GM23248 (cell line): ENCODE measurements at regions of chr19 and their contacts with region 1.

Region 1: DNA sequence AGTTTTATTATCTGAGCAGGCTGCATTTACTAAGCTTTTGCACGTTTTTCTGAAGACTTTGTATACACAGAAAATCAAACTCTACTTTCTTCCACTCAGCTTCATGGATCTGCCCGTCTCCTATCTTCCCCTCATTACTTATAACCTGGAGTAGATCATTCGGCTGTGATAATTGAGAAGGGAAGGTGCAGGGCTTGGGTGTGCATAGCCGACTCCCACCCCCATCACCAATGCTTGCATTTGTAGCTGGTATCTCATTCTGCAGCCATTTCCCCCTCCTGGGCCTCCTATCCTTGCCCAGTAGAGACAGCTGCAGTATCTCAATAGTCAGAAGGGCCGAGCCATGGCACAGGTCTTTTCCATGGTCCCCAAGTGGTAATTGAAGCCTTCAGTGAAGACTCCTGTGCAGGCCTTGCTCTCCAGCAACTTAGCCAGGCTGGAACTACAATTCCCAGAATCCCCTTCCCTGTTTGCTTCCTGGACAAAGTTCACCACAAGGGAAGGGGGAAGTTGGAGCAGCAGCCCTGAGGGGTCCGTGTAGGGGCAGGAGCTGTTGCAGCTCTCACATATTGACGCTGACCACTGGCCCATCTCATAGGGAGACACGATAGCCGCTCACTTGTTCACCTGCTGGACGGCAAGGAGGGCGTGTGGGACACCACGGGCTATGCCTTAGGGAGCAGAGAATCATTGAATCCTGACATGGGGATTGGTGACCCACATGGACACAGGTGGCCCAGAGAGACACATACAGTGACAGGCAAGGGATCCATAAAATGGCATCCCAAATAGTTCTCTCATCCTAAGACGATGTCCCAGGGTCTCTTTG is 2.1 kb upstream of the SIGLEC8 start:
- DNase-seq: peak; percentile 29
- H3K4me3 ChIP-seq: peak overlapping the region; percentile 60
- H3K27ac ChIP-seq: no peak overlapping the region
- H3K4me1 ChIP-seq: no peaks in the 10 kb centered on the region
- H3K27me3 ChIP-seq: no peaks in the 10 kb centered on the region; the same call in none of the 2 replicates

Region 2: GRCh38 chr19:51651216-51651846 is 191.0 kb after region 1 on chr19:
- in situ Hi-C with region 1: loop called (anchors 10 kb)
- DNase-seq: no peak
- H3K4me3 ChIP-seq: no peak overlapping the region
- H3K27ac ChIP-seq: no peak overlapping the region
- H3K4me1 ChIP-seq: no peaks in the 10 kb centered on the region
- H3K27me3 ChIP-seq: 0 out of 2 replicates have a peak, but pooled peaks cover 9% of the 10 kb centered on the region